Activated naive CD4-positive, alpha-beta T cell treated with anti-CD3 and anti-CD28 coated beads for 36 hours (primary cell): ENCODE measurements at regions of chr5 and their contacts with region 1.

Region 1: DNA sequence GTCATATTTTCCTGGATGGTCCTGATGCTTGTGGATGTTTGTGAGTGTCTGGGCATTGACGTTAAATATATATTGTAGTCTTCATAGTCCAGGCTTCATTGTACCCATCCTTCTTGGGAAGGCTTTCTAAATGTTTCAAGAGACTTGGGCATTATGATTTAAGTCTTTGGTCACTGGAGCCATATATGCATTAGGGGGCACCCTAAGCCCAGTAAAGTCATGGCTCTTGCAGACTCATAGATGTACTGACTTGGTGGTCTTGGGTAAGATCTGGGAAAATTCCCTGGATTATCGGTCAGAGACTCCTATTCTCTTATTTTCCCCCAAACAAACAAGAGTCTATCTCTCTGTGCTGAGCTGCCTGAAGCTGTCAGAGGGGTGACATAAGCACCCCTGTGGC is 271.1 kb downstream of the TRIM36 start:
- DNase-seq: no peak
- H3K4me3 Mint-ChIP-seq: no peak overlapping the region
- H3K27ac Mint-ChIP-seq: no peak overlapping the region
- H3K4me1 Mint-ChIP-seq: no peaks in the 10 kb centered on the region
- H3K27me3 Mint-ChIP-seq: no peaks in the 10 kb centered on the region

Region 2: GRCh38 chr5:114223866-114224265 is 674.7 kb before region 1 on chr5:
- CTCF ChIA-PET with region 1: no interaction called
- intact Hi-C with region 1: no loop called
- DNase-seq: no peak
- H3K4me3 Mint-ChIP-seq: no peak overlapping the region
- H3K27ac Mint-ChIP-seq: no peak overlapping the region
- H3K4me1 Mint-ChIP-seq: no peaks in the 10 kb centered on the region
- H3K27me3 Mint-ChIP-seq: no peaks in the 10 kb centered on the region

Region 3: DNA sequence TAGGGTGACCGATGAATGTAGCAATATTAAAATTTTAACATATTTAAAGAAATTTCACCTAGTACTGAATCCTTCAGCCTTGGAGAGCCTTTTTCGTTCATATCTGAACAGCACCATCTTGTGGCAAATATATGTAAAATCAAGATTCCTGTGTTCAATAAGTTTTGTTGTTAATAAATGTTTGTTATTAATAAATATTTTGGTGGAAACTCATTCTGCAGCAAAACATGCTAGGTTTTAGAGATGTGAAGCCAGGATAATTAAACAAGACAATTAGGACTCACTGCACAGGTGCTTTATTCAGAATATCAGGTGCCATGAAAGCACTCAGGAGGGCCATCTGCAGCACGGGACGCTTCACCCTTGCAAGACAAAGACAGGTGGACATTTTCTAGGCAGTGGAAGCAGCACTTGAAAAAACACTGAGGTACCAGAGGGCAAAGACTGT is 688.0 kb after region 1 on chr5:
- CTCF ChIA-PET with region 1: no interaction called
- intact Hi-C with region 1: loop called (anchors 5 kb)
- DNase-seq: no peak
- H3K4me3 Mint-ChIP-seq: no peak overlapping the region
- H3K27ac Mint-ChIP-seq: no peak overlapping the region
- H3K4me1 Mint-ChIP-seq: no peaks in the 10 kb centered on the region
- H3K27me3 Mint-ChIP-seq: no peaks in the 10 kb centered on the region